Left cardiac atrium (tissue), 4 donors: ENCODE measurements at regions of chr3 and their contacts with region 1.

Region 1: GRCh38 chr3:126394575-126395228 is at the start of gene CFAP100:
- DNase-seq: peak; percentile 51
- ATAC-seq: peak; percentile 67 to 71
- total RNA-seq, gene CFAP100: not detected

Region 2: DNA sequence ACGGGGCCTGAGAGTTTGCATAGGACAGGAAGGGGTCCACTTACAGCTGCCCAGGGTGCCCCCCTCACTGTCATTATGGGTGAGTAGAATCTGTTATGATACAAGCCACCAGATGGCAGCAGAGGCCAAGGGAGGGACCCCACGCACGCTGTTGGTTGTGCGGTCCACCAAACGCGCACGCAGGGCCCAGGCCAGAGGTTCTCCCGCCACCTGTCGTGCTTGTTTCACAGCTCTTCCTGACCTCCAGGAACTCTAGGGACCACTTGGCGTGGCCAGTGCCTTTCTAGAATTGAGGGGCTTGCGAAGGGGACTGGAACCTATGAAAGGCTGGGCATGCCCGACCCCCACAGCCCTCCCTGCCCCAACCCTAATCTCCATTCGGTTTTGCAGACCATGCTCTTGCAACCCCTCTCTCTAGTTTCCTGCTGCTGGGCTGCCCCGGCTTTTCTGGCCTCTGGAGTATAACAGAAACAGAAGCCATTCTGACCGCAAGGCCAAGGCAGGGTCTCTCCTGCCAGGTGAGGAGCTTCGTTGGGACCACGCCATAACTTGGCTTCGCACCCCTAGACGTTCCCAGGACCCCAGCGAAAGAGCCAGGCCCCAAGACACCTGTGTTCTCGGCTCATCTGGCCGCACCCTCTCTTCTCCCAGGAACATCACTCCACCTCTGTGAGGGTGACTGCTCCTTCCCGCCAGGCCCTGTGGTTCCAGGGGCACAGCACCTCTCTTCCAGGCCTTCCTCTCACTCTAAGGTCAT is 260.3 kb before region 1 on chr3:
- intact Hi-C with region 1: loop called (anchors 5 to 10 kb)
- DNase-seq: peak; percentile 73
- ATAC-seq: peak; percentile 86 to 88

Region 3: DNA sequence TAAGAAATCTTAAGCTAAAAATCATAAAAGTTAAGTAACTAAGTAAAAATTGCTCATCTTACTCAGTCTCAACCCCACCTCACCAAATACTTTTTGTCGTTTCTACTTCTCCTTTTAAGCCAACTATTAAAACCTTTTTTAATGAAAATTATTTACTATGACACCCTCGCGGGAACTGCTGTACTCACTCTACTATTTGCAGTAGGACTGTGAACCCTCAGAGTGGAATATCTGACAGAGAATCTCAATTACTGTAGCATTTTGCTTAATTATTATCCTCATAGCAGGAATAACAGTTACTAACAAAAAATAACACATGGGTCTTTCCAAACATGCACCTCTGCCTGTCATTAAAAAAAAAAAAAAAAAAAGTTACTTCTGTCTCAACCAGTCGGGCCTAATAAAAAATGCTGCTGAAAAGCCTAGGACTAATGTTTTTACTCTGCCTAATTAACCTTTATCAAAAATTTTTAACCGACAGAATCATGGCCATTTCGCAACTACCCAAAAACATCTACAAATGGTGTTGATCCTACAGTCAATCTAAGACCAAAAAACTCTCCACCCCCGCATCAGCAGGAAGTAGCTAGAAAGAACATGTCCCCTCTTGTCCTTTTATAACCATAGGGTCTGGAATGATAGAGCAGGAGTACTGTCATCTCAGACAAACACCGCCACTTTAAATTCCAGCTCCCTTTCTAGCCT is 224.5 kb before region 1 on chr3:
- intact Hi-C with region 1: no loop called
- DNase-seq: no peak
- ATAC-seq: no peak